Colonic mucosa (tissue), 4 donors: ENCODE measurements at regions of chr10 and their contacts with region 1.

Region 1: DNA sequence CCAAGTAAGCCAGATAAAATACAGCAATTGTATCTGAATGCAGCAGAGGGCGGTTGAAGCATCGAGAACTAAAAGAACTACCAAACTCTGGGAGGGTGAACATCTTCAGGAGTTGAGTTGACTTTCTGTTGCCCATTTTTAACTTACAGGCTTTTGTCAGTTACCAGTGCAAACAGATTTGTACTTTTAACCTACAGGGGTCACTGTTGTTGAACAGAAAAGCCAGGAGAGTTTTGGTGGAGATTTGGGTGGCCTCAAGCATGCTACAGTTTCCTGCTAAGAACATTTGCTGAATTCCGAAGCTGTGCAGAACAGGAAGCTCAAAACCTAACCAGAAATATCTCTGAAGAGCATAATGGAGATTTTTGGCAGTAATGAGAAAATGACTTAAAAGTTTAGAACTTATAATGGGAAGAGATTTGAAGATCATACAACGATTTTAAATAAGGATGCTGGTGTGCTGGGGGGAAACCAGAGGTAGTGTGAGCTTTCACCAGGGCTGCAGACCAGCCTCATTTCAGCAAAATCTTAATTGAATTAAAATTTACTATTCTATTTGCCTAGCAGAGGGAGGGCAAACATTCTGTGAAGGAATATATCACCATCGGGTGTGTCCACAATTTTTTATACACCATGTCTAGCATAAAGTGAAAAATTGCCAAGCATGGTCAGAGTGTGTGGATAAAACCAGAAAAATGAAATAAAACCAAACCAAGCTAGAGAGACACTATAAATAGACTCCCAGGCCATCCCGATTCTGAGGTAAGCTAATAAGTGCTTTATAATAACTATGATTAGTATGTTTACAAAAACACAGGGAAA is 208.6 kb upstream of the CCDC6 start:
- DNase-seq: peak; percentile 24
- H3K4me3 ChIP-seq: no peak overlapping the region
- H3K27ac ChIP-seq: no peak overlapping the region
- H3K4me1 ChIP-seq: no peaks in the 10 kb centered on the region
- H3K27me3 ChIP-seq: no peaks in the 10 kb centered on the region
- CTCF ChIP-seq: peak; percentile 56

Region 2: GRCh38 chr10:60086862-60087261 is 28.1 kb before region 1 on chr10:
- intact Hi-C with region 1: no loop called
- DNase-seq: no peak
- H3K4me3 ChIP-seq: no peak overlapping the region
- H3K27ac ChIP-seq: no peak overlapping the region
- H3K4me1 ChIP-seq: no peaks in the 10 kb centered on the region
- H3K27me3 ChIP-seq: no peaks in the 10 kb centered on the region
- CTCF ChIP-seq: no peak

Region 3: DNA sequence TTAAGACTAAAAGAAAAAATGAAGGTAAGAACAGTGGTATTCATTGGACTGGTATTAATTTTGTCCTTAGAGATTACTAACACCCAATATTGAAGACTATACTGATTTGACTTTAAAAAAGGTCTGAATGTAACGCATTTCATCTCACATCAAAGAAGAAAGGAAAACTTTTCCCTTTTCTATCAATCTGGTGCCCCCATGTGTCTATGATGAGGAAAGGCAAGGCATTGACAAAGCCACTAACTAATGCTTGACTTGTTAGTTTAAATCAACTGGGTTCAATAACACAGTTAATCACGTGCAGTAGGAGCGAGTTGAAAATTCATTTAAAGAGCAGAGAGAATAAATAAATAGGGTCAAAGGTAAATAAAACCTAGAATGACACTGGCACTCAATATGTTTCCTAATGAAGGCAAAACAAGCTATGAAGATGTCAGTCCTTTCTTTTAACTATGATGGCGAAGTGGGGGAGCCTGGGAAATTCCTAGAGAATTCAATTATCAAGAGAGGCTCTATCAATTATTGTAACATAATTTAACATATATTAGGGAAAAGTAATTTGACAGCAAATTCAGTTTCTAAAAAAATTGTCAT is 93.8 kb after region 1 on chr10:
- intact Hi-C with region 1: loop called (anchors 2 kb)
- DNase-seq: no peak
- H3K4me3 ChIP-seq: no peak overlapping the region
- H3K27ac ChIP-seq: no peak overlapping the region
- H3K4me1 ChIP-seq: no peaks in the 10 kb centered on the region
- H3K27me3 ChIP-seq: no peaks in the 10 kb centered on the region
- CTCF ChIP-seq: peak; percentile 71

Region 4: GRCh38 chr10:60388709-60389301 is 273.8 kb after region 1 on chr10:
- intact Hi-C with region 1: no loop called
- DNase-seq: no peak
- H3K4me3 ChIP-seq: no peak overlapping the region
- H3K27ac ChIP-seq: no peak overlapping the region
- H3K4me1 ChIP-seq: no peaks in the 10 kb centered on the region
- H3K27me3 ChIP-seq: no peaks in the 10 kb centered on the region
- CTCF ChIP-seq: no peak